ENCODE measurements at regions of chr11 and their contacts with region 1.

Region 1: DNA sequence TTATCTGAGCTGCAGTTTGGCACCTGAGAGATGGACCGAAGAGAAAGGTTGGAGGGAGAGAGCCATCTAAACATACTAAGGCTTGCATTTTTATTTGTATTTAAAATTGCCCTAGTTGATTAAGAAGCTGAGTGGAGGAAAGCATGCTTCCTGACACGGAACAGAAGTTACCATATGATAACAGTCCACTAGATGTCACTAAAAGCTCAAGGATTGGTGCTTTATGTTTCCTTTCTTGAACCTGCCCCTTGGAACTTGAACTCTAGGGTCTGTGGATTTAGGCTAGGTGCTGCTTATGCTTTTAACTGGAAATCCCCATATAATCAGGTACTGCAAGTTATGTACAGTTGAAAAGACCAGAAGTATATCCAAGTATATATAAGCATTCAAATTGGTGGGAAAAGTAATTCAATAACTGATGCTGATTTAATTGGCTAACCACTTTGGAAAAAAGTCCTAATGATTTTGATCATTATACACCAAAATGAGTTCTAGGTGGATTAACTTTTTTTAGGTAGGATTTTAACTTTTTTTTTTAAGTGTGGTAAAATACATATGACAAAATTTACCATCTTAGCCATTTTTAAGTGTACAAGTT is 9.5 kb downstream of the RBMXL2 start:
- DNase-seq: peak; percentile 72
- ATAC-seq: peak; percentile 73
- H3K4me3 ChIP-seq: no peak overlapping the region
- H3K27ac ChIP-seq: no peak overlapping the region
- H3K4me1 ChIP-seq: no peaks in the 10 kb centered on the region
- H3K27me3 ChIP-seq: peaks cover 37% of the 10 kb centered on the region
- CTCF ChIP-seq: peak; percentile 86

Region 2: DNA sequence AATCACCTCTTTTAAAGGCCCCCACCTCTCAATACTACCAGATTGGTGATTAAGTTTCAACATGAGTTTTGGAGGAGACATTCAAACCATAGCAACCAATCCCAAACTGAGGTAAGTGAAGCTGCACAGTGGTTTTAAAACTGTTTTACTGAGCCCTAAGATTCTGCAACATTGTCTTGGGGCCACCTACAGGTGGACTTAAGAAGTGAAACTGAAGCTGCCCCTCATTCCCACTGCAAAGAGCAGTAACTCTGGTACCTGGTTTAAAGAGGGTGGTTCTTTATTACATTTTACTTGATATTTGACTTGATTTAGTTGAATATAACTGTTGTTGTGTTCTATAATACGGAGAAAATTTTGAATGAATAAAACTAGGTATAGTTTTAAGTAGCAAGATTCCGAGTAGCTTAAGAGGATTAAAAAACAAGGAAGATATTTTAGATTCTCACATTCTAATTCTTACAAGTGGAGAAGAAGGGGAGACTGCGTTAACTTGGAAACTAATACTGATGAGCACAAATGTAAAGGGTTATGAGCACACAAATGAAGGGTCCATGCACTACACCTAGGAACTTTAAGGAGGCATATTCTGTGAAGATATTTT is 180.1 kb after region 1 on chr11:
- CTCF ChIA-PET with region 1: no interaction called
- POLR2A ChIA-PET with region 1: no interaction called
- intact Hi-C with region 1: loop called (anchors 2 kb)
- DNase-seq: peak; percentile 69
- ATAC-seq: peak; percentile 68
- H3K4me3 ChIP-seq: no peak overlapping the region
- H3K27ac ChIP-seq: no peak overlapping the region
- H3K4me1 ChIP-seq: peaks cover 21% of the 10 kb centered on the region
- H3K27me3 ChIP-seq: no peaks in the 10 kb centered on the region
- CTCF ChIP-seq: peak; percentile 84

Region 3: GRCh38 chr11:7665473-7666291 is 567.3 kb after region 1 on chr11:
- CTCF ChIA-PET with region 1: interaction called, 3 read pairs
- POLR2A ChIA-PET with region 1: no interaction called
- intact Hi-C with region 1: loop called (anchors 1 kb)
- DNase-seq: peak; percentile 86
- ATAC-seq: peak; percentile 100
- H3K4me3 ChIP-seq: no peak overlapping the region
- H3K27ac ChIP-seq: no peak overlapping the region
- H3K4me1 ChIP-seq: no peaks in the 10 kb centered on the region
- H3K27me3 ChIP-seq: no peaks in the 10 kb centered on the region
- CTCF ChIP-seq: peak; percentile 83

Region 4: GRCh38 chr11:7690648-7691047 is 592.3 kb after region 1 on chr11:
- CTCF ChIA-PET with region 1: interaction called, 3 read pairs
- POLR2A ChIA-PET with region 1: no interaction called
- intact Hi-C with region 1: loop called (anchors 2 kb)
- DNase-seq: peak; percentile 50
- ATAC-seq: no peak; the same call in 1 of the 2 replicates
- H3K4me3 ChIP-seq: no peak overlapping the region
- H3K27ac ChIP-seq: no peak overlapping the region
- H3K4me1 ChIP-seq: no peaks in the 10 kb centered on the region
- H3K27me3 ChIP-seq: peaks cover 35% of the 10 kb centered on the region
- CTCF ChIP-seq: no peak